Activated T-helper 2 cell treated with anti-CD3 and anti-CD28 coated beads, Interferon-gamma antibody, Interleukin-2, Interleukin-4, amounts not matched to agents 10 μg/mL and 5 μg/mL and 100 μg/mL, durations not matched to agents 14 hours and 24 hours and 36 hours (primary cell): ENCODE measurements at regions of chr15 and their contacts with region 1.

Region 1: DNA sequence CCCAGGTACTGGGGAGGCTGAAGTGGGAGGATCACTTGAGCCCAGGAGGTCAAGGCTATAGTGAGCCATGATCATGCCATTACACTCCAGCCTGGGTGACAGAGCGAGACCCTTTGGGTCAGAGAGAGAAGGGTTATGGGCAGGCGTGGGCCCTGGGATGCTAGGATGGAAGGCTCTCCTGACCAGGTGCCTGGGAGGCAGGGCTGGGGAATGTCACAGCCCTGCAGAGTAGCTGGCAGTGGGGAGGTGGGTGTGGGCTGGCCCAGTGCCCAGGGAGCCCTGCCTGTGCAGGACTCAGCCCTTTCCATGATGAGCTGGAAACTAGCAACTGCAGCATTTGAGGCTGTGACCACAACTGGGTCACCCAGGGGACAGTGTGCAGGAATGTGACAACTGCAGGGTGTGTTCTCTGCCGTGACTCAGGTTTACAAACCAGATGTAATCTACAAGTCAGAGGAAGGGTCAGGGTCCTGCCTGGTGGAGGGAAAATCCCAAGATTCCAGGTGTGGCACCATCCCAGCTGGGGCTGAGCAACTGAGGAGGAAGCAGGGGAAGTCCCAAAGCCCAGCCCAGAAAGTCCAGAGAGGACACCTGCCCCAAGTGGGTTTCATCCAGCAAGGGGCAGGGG is 45.4 kb downstream of the SLC28A1 start:
- DNase-seq: no peak
- H3K4me3 Mint-ChIP-seq: no peak overlapping the region
- H3K27ac Mint-ChIP-seq: no peak overlapping the region
- H3K4me1 Mint-ChIP-seq: peaks cover 7% of the 10 kb centered on the region
- H3K27me3 Mint-ChIP-seq: no peaks in the 10 kb centered on the region

Region 2: GRCh38 chr15:83955806-83956265 is 974.0 kb before region 1 on chr15:
- intact Hi-C with region 1: no loop called
- DNase-seq: no peak
- H3K4me3 Mint-ChIP-seq: no peak overlapping the region
- H3K27ac Mint-ChIP-seq: no peak overlapping the region
- H3K4me1 Mint-ChIP-seq: no peaks in the 10 kb centered on the region
- H3K27me3 Mint-ChIP-seq: peaks cover 27% of the 10 kb centered on the region

Region 3: GRCh38 chr15:84588053-84588874 is 341.6 kb before region 1 on chr15:
- intact Hi-C with region 1: loop called (anchors 1 kb)
- DNase-seq: peak; percentile 77
- H3K4me3 Mint-ChIP-seq: peak overlapping the region; percentile 27
- H3K27ac Mint-ChIP-seq: no peak overlapping the region
- H3K4me1 Mint-ChIP-seq: peaks cover 3% of the 10 kb centered on the region
- H3K27me3 Mint-ChIP-seq: peaks cover 26% of the 10 kb centered on the region

Region 4: GRCh38 chr15:84844964-84845363 is 84.9 kb before region 1 on chr15:
- intact Hi-C with region 1: loop called (anchors 1 kb)
- DNase-seq: no peak
- H3K4me3 Mint-ChIP-seq: no peak overlapping the region
- H3K27ac Mint-ChIP-seq: no peak overlapping the region
- H3K4me1 Mint-ChIP-seq: no peaks in the 10 kb centered on the region
- H3K27me3 Mint-ChIP-seq: peaks cover 4% of the 10 kb centered on the region

Region 5: GRCh38 chr15:84874981-84875699 is 54.7 kb before region 1 on chr15:
- intact Hi-C with region 1: loop called (anchors 2 kb)
- DNase-seq: no peak
- H3K4me3 Mint-ChIP-seq: no peak overlapping the region
- H3K27ac Mint-ChIP-seq: no peak overlapping the region
- H3K4me1 Mint-ChIP-seq: peaks cover 4% of the 10 kb centered on the region
- H3K27me3 Mint-ChIP-seq: peaks cover under 1% of the 10 kb centered on the region

Region 6: DNA sequence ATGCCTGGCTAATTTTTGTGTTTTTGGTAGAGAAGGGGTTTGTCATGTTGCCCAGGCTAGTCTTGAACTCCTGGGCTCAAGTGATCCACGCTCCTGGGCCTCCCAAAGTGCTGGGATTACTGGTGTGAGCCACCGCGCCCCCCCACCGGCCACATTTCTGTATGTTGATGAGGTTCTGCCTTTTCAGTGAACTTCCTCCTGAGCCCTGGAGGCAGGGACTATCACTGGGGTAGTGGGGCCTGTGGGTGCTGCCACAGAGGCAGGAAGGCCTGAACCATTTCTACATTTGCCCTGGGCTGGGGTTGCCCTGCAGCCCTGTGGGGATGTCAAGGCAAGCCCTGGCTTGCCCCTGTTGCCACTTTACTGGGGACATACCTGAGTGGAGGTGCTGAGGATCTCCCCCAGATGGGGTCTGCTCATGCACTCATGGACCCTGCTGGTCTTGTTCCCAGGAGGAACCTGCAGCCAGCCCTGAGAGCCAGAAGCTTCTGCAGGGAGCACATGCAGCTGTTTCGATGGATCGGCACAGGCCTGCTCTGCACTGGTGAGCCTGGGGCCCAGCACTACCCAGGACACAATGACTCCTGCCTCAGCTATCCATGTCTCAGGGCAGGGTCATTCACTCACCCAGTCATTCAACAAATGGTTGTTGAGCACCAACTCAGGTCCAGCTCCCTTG is 39.7 kb before region 1 on chr15:
- intact Hi-C with region 1: no loop called
- DNase-seq: no peak
- H3K4me3 Mint-ChIP-seq: no peak overlapping the region
- H3K27ac Mint-ChIP-seq: no peak overlapping the region
- H3K4me1 Mint-ChIP-seq: no peaks in the 10 kb centered on the region
- H3K27me3 Mint-ChIP-seq: peaks cover 3% of the 10 kb centered on the region